Sciatic nerve (tissue), 2 donors: ENCODE measurements at regions of chr16 and their contacts with region 1.

Region 1: DNA sequence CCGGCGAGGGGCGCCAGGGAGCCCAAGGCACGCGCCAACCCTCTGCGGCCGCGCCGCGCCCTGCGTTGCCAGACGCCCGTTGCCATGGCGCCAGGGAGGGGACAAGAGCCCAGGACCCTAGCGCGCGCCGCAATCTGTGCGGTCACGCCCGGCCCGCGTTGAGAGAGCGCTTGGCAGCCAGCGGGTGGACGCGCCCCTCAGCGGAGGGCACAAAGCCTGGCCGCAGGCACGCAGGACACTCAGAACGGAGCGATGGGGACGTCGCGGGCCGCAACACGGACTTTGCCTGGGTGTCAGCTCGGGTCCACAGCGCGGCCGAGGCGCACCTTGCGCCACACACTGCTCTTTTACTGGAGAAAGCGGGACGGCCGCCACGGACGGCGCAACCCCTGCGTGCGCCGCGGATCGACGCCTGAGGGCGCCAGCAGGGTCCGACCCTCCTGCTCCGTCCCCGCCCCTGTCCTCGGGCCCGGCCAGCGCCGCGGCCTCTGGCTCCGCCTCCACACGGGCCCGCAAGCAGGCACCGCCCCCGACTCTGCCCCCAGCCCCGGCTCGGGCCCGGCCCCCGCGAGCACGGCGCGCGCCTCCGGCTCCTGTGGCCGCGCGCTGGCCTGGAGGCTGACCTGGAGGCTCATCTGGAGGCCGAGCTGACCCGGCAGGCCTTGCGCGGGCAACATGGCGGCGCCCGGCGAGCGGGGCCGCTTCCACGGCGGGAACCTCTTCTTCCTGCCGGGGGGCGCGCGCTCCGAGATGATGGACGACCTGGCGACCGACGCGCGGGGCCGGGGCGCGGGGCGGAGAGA is at the start of gene GFER:
- DNase-seq: peak; percentile 94
- ATAC-seq: peak; percentile 94
- total RNA-seq, gene GFER: 15.5 TPM

Region 2: DNA sequence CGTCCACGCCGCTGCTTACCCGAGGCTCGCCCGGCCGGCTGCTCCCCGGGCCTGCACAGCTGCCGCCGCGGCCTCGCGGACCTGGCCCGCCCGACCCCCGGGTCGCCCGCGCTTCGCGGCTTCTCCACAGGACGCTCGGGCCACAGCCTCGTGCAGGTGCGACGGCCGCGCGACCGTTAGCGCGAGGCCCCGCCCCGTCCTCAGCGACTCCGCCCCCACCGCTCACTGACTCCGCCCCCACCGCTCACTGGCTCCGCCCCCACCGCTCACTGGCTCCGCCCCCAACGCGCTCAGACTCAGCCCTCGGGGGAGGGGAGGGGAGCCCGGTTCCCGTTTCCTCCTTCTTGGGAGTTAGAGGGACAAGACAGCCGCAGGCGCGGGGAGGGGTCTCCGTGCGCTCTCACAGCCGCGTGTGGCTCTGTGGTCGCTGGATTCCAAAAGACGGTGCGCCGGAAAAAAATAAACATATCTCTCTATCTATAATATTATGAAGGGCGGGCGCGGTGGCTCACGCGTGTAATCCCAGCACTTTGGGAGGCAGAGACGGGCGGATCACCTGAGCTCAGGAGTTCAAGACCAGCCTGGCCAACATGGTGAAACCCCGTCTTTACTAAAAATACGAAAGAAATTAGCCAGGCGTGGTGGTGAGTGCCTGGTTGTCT is 111.6 kb before region 1 on chr16 and contains the start of gene MEIOB:
- intact Hi-C with region 1: no loop called
- DNase-seq: no peak
- ATAC-seq: no peak
- total RNA-seq, gene MEIOB: not detected

Region 3: GRCh38 chr16:1959269-1960049 is 24.3 kb before region 1 on chr16 and contains the start of gene NDUFB10:
- intact Hi-C with region 1: loop called (anchors 2 kb)
- DNase-seq: peak; percentile 95
- ATAC-seq: peak; percentile 94
- total RNA-seq, gene NDUFB10: 85.8 TPM

Region 4: GRCh38 chr16:2710711-2711231 is 727.0 kb after region 1 on chr16:
- intact Hi-C with region 1: loop called (anchors 5 kb)
- DNase-seq: no peak
- ATAC-seq: no peak